Activated naive CD8-positive, alpha-beta T cell treated with anti-CD3 and anti-CD28 coated beads, Interleukin-2, amount 10 ng/mL, durations not matched to agents 7 days and 5 days (primary cell): ENCODE measurements at regions of chr6 and their contacts with region 1.

Region 1: DNA sequence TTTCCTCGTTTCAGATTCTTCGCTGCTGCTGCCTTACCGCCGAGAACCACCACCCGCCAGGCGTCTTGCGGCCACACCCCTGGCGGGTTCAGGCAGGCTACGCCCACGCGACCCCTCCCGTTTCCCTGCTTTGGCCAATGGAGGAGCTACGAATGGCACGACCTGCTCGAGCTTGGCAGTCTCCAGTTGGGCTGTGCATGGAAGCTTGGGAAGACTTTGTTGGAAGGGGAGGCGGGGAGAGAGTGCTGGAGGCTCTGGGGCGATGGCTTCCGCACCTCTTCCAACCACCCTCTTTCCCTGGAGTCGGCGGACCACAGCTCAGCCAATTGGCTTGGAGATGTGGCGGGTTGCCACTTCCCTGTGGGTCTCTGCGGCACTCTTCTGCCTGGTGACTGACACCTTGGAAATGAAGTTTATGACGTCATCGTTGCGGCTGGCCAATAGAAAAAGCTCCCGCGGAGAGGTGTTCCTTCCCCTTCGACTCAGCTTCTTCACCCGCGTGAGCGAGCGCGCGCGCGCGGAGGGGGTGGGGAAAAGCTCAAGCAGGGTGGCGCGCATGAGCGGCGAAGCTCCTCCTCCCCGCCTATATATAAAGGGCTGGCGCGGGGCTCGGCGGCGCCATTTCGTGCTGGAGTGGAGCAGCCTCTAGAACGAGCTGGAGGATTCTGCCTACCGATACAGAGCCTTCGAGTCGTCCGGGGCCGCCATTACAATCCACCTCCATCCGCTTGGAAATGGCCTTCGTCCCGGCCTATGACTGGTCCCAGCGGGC is 3.4 kb downstream of the BRD2 start:
- DNase-seq: peak; percentile 99
- ATAC-seq: peak; percentile 49
- H3K4me3 Mint-ChIP-seq: peak overlapping the region; percentile 89
- H3K27ac Mint-ChIP-seq: peak overlapping the region; percentile 94
- H3K4me1 Mint-ChIP-seq: peaks cover 30% of the 10 kb centered on the region
- H3K27me3 Mint-ChIP-seq: no peaks in the 10 kb centered on the region

Region 2: DNA sequence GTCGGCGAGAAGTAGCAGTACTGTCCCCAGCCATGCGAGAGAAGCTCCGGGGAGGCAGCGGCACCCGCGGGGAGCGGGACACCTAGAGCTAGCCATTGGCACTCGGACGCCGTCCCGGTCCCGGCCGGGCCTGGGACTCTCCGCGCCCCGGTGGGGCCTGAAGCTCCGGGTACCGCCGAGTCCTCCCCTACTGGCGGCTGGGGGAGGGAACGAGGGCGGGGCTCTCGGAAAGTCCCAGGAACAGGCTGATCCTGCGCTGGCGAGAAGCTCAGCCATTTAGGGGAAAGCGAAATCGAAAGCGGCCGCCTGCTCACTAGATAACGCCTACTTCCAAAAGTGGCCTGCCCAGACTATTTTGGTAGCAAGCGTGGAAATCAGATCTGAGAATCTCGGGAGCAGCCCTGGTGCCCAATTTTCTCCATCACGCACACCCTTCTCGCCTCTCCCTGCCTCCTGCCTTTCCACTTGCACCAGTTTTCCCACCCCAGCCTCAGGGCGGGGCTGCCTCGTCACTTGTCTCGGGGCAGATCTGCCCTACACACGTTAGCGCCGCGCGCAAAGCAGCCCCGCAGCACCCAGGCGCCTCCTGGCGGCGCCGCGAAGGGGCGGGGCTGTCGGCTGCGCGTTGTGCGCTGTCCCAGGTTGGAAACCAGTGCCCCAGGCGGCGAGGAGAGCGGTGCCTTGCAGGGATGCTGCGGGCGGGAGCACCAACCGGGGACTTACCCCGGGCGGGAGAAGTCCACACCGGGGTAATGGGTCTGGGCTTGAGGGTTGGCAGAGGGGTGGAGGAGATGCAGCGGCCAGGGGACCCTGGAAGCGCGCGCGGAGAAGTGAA is 118.0 kb before region 1 on chr6 and contains the starts of genes PSMB9 and TAP1:
- POLR2A ChIA-PET with region 1: interaction called, 166 read pairs
- DNase-seq: peak; percentile 96
- ATAC-seq: peak; percentile 86
- H3K4me3 Mint-ChIP-seq: peak within 1 kb of the TSS; percentile 98
- H3K27ac Mint-ChIP-seq: peak within 1 kb of the TSS; percentile 100
- H3K4me1 Mint-ChIP-seq: peaks cover 54% of the 10 kb centered on the region
- H3K27me3 Mint-ChIP-seq: no peaks in the 10 kb centered on the region
- total RNA-seq, gene PSMB9: 353 to 356 TPM
- total RNA-seq, gene TAP1: 315 to 323 TPM

Region 3: GRCh38 chr6:32894080-32895005 is 77.4 kb before region 1 on chr6:
- POLR2A ChIA-PET with region 1: interaction called, 113 read pairs
- DNase-seq: peak; percentile 96
- ATAC-seq: peak; percentile 99
- H3K4me3 Mint-ChIP-seq: peak overlapping the region; percentile 99
- H3K27ac Mint-ChIP-seq: peak overlapping the region; percentile 96
- H3K4me1 Mint-ChIP-seq: peaks cover 28% of the 10 kb centered on the region
- H3K27me3 Mint-ChIP-seq: no peaks in the 10 kb centered on the region

Region 4: DNA sequence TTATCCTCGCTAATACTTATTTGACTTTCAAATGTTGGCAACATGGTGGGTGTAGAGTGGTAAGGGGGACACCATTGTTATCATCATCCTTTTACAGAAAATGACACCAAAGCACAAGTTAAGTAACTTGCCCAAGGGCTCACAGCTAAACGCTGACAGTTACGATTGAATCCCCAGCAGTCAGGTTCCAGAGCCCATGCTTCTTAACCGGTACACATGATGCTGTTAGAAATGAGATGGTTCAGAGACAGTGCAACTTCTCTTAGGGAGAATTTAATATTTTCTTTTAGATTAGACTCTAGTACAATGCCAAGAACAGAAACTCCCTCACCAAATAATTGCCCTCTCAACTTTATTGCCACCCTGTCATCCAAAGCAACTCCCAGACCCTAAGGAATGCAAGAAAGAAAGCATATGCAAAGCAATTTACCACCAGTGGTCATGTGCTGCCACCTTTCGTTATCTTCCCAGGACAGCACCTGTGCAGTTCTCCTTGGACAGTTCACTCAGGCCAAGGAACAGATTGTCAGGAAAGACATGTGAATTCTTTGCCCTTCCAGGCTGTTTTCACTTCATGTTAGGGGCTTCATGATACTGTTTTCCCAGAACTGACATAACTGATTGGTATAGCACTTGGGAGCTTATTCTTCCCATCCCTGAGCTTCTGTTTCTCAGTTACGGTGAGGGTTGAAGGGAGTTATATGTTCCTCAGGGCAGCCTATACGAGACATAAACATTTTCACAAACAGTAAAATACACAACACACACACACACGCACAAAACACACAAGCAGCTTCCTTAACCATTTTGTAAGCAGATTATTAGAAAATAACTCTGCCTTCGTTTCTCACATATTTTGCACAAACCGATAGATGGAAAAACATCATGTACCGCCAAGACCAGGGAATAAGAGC is 24.0 kb before region 1 on chr6:
- POLR2A ChIA-PET with region 1: interaction called, 261 read pairs
- DNase-seq: no peak
- ATAC-seq: no peak
- H3K4me3 Mint-ChIP-seq: no peak overlapping the region
- H3K27ac Mint-ChIP-seq: no peak overlapping the region
- H3K4me1 Mint-ChIP-seq: peaks cover 55% of the 10 kb centered on the region
- H3K27me3 Mint-ChIP-seq: no peaks in the 10 kb centered on the region

Region 5: DNA sequence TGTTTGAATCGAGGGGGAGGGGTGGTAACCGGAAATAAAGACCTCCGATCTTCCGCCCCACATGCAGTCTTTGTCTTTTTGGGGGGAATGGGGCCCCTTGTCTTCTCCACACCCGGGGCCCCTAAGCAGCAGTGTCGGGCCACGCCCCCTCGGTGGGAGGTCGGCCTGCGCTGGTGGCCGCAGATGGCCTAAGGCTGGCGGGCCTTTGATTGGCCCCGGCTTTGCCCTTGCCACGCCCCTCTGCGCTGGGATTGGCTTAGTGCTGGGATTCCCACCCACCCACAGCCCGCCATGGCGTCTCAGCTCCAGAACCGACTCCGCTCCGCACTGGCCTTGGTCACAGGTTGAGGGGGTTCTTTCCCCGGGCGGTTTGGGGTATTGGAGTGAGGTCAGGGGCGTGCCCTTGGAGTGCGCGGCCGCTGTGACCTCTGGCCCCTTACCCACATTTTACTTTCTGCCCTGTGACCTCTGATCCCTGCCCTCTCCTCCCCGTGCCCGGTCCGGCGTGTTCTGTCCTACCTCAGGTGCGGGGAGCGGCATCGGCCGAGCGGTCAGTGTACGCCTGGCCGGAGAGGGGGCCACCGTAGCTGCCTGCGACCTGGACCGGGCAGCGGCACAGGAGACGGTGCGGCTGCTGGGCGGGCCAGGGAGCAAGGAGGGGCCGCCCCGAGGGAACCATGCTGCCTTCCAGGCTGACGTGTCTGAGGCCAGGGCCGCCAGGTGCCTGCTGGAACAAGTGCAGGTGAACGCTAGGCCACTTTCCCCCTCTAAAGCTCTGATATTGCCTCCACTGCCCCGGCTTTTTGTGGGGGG is 232.8 kb after region 1 on chr6 and contains the start of gene HSD17B8:
- POLR2A ChIA-PET with region 1: interaction called, 11 read pairs
- DNase-seq: peak; percentile 91
- ATAC-seq: peak; percentile 65
- H3K4me3 Mint-ChIP-seq: peak within 1 kb of the TSS; percentile 97
- H3K27ac Mint-ChIP-seq: peak within 1 kb of the TSS; percentile 93
- H3K4me1 Mint-ChIP-seq: peaks cover 44% of the 10 kb centered on the region
- H3K27me3 Mint-ChIP-seq: no peaks in the 10 kb centered on the region
- total RNA-seq, gene HSD17B8: 21.1 to 21.8 TPM

Region 6: GRCh38 chr6:33215271-33216116 is 243.7 kb after region 1 on chr6:
- POLR2A ChIA-PET with region 1: no interaction called
- DNase-seq: no peak
- ATAC-seq: peak; percentile 27
- H3K4me3 Mint-ChIP-seq: peak overlapping the region; percentile 30
- H3K27ac Mint-ChIP-seq: peak overlapping the region; percentile 39
- H3K4me1 Mint-ChIP-seq: peaks cover 28% of the 10 kb centered on the region
- H3K27me3 Mint-ChIP-seq: peaks cover 16% of the 10 kb centered on the region